ENCODE measurements at regions of chr5 and their contacts with region 1.

Region 1: DNA sequence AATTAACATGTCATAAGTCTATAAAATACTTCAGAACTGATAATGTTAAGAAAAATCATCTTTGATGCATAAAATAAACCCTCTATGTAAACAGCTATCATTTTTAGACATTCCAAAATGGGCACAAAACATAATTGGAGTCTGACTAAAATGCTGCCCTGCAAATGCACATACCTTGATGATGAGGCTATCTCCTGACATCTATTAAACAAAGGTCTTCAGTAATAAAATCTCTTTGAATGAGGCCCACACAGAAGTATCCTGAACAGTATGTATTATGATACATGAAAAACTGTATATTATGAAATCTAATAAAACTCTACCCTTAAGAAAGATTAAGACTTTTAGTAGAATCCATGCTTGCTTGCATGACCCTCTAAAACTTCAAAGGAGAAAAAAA is 66.1 kb downstream of the FBXL17 start:
- DNase-seq: no peak
- ATAC-seq: no peak
- H3K4me3 ChIP-seq: no peak overlapping the region
- H3K27ac ChIP-seq: no peak overlapping the region
- H3K4me1 ChIP-seq: no peaks in the 10 kb centered on the region
- H3K27me3 ChIP-seq: no peaks in the 10 kb centered on the region
- CTCF ChIP-seq: no peak
- EP300 ChIP-seq: no peak
- POLR2A ChIP-seq: no peak
- RAD21 ChIP-seq: no peak

Region 2: GRCh38 chr5:108334225-108334624 is 18.4 kb after region 1 on chr5:
- CTCF ChIA-PET with region 1: no interaction called
- POLR2A ChIA-PET with region 1: no interaction called
- in situ Hi-C with region 1: no loop called
- intact Hi-C with region 1: loop called (anchors 2 kb)
- DNase-seq: no peak
- ATAC-seq: no peak
- H3K4me3 ChIP-seq: no peak overlapping the region
- H3K27ac ChIP-seq: no peak overlapping the region
- H3K4me1 ChIP-seq: no peaks in the 10 kb centered on the region
- H3K27me3 ChIP-seq: no peaks in the 10 kb centered on the region
- CTCF ChIP-seq: no peak
- EP300 ChIP-seq: no peak
- POLR2A ChIP-seq: no peak
- RAD21 ChIP-seq: no peak